ENCODE measurements at regions of chr7 and their contacts with region 1.

Region 1: GRCh38 chr7:142853739-142854371 is 1.0 kb upstream of the EPHB6 start:
- DNase-seq: peak; percentile 70
- ATAC-seq: peak; percentile 78
- H3K4me3 ChIP-seq: peak overlapping the region; percentile 87
- H3K27ac ChIP-seq: peak overlapping the region; percentile 58
- H3K4me1 ChIP-seq: peaks cover 19% of the 10 kb centered on the region
- H3K27me3 ChIP-seq: no peaks in the 10 kb centered on the region
- CTCF ChIP-seq: peak; percentile 83

Region 2: GRCh38 chr7:142632291-142633134 is 221.3 kb before region 1 on chr7:
- CTCF ChIA-PET with region 1: no interaction called
- POLR2A ChIA-PET with region 1: no interaction called
- intact Hi-C with region 1: no loop called
- DNase-seq: peak; percentile 87
- ATAC-seq: peak; percentile 96
- H3K4me3 ChIP-seq: no peak overlapping the region
- H3K27ac ChIP-seq: no peak overlapping the region
- H3K4me1 ChIP-seq: no peaks in the 10 kb centered on the region; the same call in 1 of the 2 replicates
- H3K27me3 ChIP-seq: peaks cover 7% of the 10 kb centered on the region; the same call in 1 of the 2 replicates
- CTCF ChIP-seq: peak; percentile 83

Region 3: GRCh38 chr7:142866361-142867058 is 12.7 kb after region 1 on chr7:
- CTCF ChIA-PET with region 1: no interaction called
- POLR2A ChIA-PET with region 1: interaction called, 22 read pairs
- intact Hi-C with region 1: loop called (anchors 1 kb)
- DNase-seq: peak; percentile 73
- ATAC-seq: peak; percentile 92
- H3K4me3 ChIP-seq: no peak overlapping the region
- H3K27ac ChIP-seq: no peak overlapping the region
- H3K4me1 ChIP-seq: no peaks in the 10 kb centered on the region
- H3K27me3 ChIP-seq: no peaks in the 10 kb centered on the region
- CTCF ChIP-seq: peak; percentile 81

Region 4: DNA sequence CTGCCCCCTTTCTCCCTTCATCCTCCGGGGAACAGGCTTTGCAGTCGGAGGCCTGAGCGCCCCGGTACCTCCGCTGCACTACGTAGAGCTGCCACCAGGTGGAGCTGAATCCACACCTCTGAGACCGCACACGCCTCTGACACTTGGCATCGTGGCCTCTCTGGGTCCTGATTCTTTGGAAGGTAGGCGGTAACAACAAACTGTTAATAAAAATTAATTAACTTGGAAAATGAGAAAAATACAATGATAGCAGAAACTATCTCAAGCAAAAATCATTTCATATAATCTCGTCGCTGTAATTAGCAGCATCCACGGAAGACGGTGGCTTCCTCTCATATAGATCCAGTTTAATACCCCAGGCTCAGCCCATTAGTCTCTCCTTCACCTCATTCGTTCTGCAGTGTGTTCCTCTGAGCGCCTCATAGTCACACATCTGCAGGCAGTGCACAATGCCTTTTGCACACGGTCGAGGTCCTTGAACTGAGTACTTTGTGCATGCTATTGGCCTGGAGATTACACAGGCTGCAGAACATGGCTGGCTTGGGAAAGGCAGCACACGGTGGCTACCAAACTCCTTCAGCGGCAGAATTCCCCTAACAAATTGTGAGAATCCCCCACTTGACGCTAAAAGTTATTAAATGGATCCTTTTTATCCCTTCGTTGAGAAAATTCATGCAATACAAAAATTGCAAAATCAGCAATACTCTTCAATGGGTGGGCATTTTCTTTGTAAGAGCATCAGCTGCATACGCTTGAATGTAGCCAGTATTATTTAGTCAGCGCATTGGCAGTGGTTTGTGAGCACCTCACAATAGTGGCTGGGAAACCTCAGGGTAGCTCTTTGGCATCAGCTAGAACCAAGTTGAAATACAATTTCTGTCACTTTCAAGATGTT is 154.4 kb after region 1 on chr7:
- CTCF ChIA-PET with region 1: interaction called, 4 read pairs
- POLR2A ChIA-PET with region 1: no interaction called
- intact Hi-C with region 1: loop called (anchors 1 kb)
- DNase-seq: peak; percentile 81
- ATAC-seq: peak; percentile 84
- H3K4me3 ChIP-seq: no peak overlapping the region
- H3K27ac ChIP-seq: no peak overlapping the region
- H3K4me1 ChIP-seq: peaks cover under 1% of the 10 kb centered on the region
- H3K27me3 ChIP-seq: peaks cover 31% of the 10 kb centered on the region
- CTCF ChIP-seq: peak; percentile 87